Mammary epithelial cell (primary cell): ENCODE measurements at regions of chr7 and their contacts with region 1.

Region 1: DNA sequence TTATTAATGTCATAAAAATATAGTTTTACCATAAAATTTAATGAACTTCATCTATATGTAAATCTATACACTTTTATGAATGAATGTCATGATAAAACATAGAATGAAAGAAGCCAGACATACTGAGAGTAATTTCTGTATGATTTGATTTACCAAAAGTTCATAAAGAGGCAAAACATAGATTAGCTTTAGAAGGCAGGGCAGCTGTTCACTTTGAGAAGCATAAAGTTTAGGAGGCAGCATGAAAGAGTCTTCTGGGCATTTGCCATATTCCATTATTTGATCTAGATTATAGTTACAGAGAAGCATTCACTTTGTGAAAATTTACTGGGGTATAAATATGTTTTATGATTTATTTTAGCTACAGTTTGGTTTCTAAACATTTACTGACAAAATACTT is 487.2 kb downstream of the ANKRD7 start:
- DNase-seq: no peak
- H3K4me3 ChIP-seq: no peak overlapping the region
- H3K27ac ChIP-seq: no peak overlapping the region
- H3K4me1 ChIP-seq: no peaks in the 10 kb centered on the region
- H3K27me3 ChIP-seq: peaks cover 6% of the 10 kb centered on the region
- CTCF ChIP-seq: no peak

Region 2: GRCh38 chr7:118794941-118795340 is 83.3 kb after region 1 on chr7:
- CTCF ChIA-PET with region 1: no interaction called
- dilution Hi-C with region 1: loop called (anchors 5 kb)
- in situ Hi-C with region 1: no loop called
- intact Hi-C with region 1: no loop called
- DNase-seq: no peak
- H3K4me3 ChIP-seq: no peak overlapping the region
- H3K27ac ChIP-seq: no peak overlapping the region
- H3K4me1 ChIP-seq: no peaks in the 10 kb centered on the region
- H3K27me3 ChIP-seq: peaks cover 7% of the 10 kb centered on the region
- CTCF ChIP-seq: no peak